Endothelial cell of umbilical vein (primary cell): ENCODE measurements at regions of chr10 and their contacts with region 1.

Region 1: GRCh38 chr10:14478604-14479003 is 147.9 kb upstream of the FRMD4A start:
- DNase-seq: peak; percentile 63
- H3K4me3 ChIP-seq: no peak overlapping the region
- H3K27ac ChIP-seq: no peak overlapping the region
- H3K4me1 ChIP-seq: no peaks in the 10 kb centered on the region
- H3K27me3 ChIP-seq: peaks cover 6 to 10% of the 10 kb centered on the region in 2 experiments
- CTCF ChIP-seq: peak; percentile 33 to 56
- POLR2A ChIP-seq: no peak

Region 2: GRCh38 chr10:13613519-13613918 is 865.1 kb before region 1 on chr10:
- CTCF ChIA-PET with region 1: interaction called, 4 read pairs
- POLR2A ChIA-PET with region 1: no interaction called
- dilution Hi-C with region 1: no loop called
- intact Hi-C with region 1: loop called (anchors 10 kb)
- DNase-seq: peak; percentile 60
- H3K4me3 ChIP-seq: no peak overlapping the region
- H3K27ac ChIP-seq: no peak overlapping the region
- H3K4me1 ChIP-seq: peaks cover 2% of the 10 kb centered on the region
- H3K27me3 ChIP-seq: no peaks in the 10 kb centered on the region
- CTCF ChIP-seq: peak; percentile 20 to 27
- POLR2A ChIP-seq: no peak

Region 3: GRCh38 chr10:14200698-14201544 is 277.7 kb before region 1 on chr10:
- CTCF ChIA-PET with region 1: interaction called, 121 read pairs
- POLR2A ChIA-PET with region 1: no interaction called
- dilution Hi-C with region 1: no loop called
- intact Hi-C with region 1: loop called (anchors 1 kb)
- DNase-seq: no peak
- H3K4me3 ChIP-seq: no peak overlapping the region
- H3K27ac ChIP-seq: no peak overlapping the region
- H3K4me1 ChIP-seq: no peaks in the 10 kb centered on the region
- H3K27me3 ChIP-seq: peaks cover 11 to 14% of the 10 kb centered on the region in 2 experiments
- CTCF ChIP-seq: peak; percentile 11 to 28
- POLR2A ChIP-seq: no peak

Region 4: GRCh38 chr10:14262836-14263425 is 215.7 kb before region 1 on chr10:
- CTCF ChIA-PET with region 1: no interaction called
- POLR2A ChIA-PET with region 1: no interaction called
- dilution Hi-C with region 1: no loop called
- intact Hi-C with region 1: no loop called
- DNase-seq: no peak
- H3K4me3 ChIP-seq: no peak overlapping the region
- H3K27ac ChIP-seq: no peak overlapping the region
- H3K4me1 ChIP-seq: no peaks in the 10 kb centered on the region
- H3K27me3 ChIP-seq: peaks cover 9 to 13% of the 10 kb centered on the region in 2 experiments
- CTCF ChIP-seq: no peak
- POLR2A ChIP-seq: no peak

Region 5: GRCh38 chr10:14302035-14302434 is 176.6 kb before region 1 on chr10:
- CTCF ChIA-PET with region 1: no interaction called
- POLR2A ChIA-PET with region 1: no interaction called
- dilution Hi-C with region 1: no loop called
- intact Hi-C with region 1: loop called (anchors 10 kb)
- DNase-seq: peak; percentile 26
- H3K4me3 ChIP-seq: no peak overlapping the region
- H3K27ac ChIP-seq: no peak overlapping the region
- H3K4me1 ChIP-seq: no peaks in the 10 kb centered on the region
- H3K27me3 ChIP-seq: peaks cover 26 to 29% of the 10 kb centered on the region in 2 experiments
- CTCF ChIP-seq: peak; percentile 19 to 43
- POLR2A ChIP-seq: no peak

Region 6: DNA sequence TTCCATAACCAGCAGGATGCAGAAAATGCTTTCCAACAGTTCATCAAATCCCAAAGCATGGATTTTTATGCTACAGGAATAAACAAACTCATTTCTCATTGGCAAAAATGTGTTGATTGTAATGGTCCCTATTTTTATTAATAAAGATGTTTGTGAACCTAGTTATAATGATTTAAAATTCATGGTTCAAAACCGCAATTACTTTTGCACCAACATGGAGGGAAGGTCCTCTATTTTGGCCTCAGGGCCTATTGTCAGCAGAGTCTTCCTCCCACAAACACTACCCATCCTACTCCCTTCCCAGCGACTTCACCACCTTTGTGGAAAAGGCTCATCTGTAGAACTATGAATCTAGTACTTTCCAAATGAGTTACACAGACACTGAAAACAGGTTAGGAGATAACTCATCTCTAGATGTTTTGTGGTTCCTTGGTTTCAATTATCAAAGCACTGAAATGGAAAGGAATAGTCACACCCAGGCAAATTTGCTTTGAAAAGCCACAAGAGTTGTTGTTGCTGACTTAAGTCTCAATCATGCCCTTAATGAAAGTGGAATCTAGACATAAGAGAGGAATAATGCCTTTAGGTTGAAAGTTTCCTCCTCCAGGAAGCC is 88.5 kb before region 1 on chr10:
- CTCF ChIA-PET with region 1: interaction called, 8 read pairs
- POLR2A ChIA-PET with region 1: no interaction called
- dilution Hi-C with region 1: no loop called
- intact Hi-C with region 1: loop called (anchors 5 kb)
- DNase-seq: no peak
- H3K4me3 ChIP-seq: no peak overlapping the region
- H3K27ac ChIP-seq: no peak overlapping the region
- H3K4me1 ChIP-seq: no peaks in the 10 kb centered on the region
- H3K27me3 ChIP-seq: peaks cover 4 to 10% of the 10 kb centered on the region in 2 experiments
- CTCF ChIP-seq: no peak
- POLR2A ChIP-seq: no peak